ENCODE measurements at regions of chr12 and their contacts with region 1.

Region 1: DNA sequence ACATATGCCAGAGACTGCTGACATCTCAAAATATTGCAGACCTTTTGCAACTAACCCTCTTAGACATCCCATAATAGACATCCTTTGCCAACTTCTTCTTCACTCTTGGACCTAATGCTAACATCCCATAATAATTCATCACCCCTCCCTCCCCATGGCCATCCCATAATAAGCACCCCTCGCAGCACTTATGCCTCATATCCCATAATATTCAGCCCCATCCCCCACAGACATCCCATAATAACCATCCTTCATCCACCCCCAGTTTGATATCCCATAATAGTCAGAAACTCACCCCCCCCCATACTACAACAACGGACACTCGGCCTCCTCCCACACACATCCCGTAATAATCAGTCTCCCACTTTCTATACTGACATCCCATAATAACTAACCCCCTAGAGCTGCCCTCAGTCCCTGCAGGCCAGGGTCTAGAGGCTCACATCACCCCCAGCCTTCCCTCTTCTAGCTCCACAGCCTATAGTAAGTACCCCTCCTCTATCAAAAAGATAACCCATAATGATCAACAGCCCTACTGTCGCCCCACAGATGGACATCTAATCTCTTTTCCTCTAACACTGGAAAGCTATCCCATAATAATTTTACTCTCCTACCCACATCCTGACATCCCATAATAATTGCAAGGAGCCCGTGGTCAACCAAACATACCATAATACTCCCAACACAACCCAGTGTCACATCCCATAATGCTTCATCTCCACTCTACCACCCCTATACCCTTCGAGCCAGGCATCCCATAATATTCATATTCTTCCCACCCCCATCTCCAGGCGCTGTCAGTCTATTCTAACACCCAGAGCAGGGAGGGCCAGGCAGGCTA is 792 bp upstream of the CHD4 start:
- DNase-seq: peak; percentile 83
- H3K4me3 ChIP-seq: no peak overlapping the region
- H3K27ac ChIP-seq: peak overlapping the region; percentile 69
- H3K4me1 ChIP-seq: peaks cover 21% of the 10 kb centered on the region
- H3K27me3 ChIP-seq: no peaks in the 10 kb centered on the region
- CTCF ChIP-seq: no peak

Region 2: DNA sequence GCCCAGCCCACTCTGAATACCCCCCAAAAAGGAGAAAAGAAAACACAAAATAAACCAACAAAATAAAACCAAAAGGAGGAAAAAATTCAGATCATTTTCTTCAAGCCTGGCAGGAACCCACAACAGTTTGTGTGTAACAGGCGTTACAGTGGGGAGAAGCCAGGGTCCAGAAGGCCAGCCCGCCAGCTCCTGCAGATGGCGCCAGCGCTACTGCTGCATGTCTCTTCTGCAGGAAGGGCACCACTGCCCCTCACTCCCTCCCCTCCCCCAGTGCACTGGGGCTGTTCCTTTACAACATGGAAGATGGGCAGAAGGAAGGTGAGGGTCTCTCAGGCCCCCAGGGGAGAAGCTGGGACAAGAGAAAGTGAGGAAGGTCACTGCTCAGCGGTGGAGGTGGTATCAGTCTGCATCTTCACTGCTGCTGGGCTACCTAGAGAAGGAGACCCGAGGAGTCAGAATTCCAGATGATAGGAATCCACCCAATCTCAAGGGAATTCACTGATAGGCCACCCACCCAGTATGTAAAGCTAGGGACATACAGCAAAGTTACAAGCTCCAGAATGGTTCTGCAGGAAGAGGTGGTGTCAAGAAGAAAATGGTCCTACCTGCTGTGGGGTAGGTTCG is 37.6 kb before region 1 on chr12:
- intact Hi-C with region 1: loop called (anchors 5 kb)
- DNase-seq: peak; percentile 59
- H3K4me3 ChIP-seq: no peak overlapping the region
- H3K27ac ChIP-seq: no peak overlapping the region
- H3K4me1 ChIP-seq: no peaks in the 10 kb centered on the region
- H3K27me3 ChIP-seq: no peaks in the 10 kb centered on the region
- CTCF ChIP-seq: peak; percentile 42

Region 3: DNA sequence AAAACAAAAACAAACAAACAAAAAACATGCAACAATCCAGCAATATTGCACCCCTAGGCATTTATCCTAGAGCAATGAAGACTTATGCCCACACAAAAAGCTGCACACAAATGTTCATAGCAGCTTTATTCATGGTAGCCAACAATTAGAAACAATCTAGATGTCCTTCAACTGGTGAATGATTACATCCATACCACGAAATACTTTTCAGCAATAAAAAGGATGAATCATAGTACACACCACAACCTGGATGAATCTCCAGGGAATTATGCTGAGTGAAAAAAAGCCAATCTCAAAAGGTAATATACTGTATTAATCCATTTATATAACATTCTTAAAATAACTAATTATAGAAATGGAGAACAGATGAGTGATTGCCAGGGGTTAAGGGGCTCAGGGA is 199.2 kb after region 1 on chr12:
- intact Hi-C with region 1: no loop called
- DNase-seq: no peak
- H3K4me3 ChIP-seq: no peak overlapping the region
- H3K27ac ChIP-seq: no peak overlapping the region
- H3K4me1 ChIP-seq: no peaks in the 10 kb centered on the region
- H3K27me3 ChIP-seq: no peaks in the 10 kb centered on the region
- CTCF ChIP-seq: no peak

Region 4: DNA sequence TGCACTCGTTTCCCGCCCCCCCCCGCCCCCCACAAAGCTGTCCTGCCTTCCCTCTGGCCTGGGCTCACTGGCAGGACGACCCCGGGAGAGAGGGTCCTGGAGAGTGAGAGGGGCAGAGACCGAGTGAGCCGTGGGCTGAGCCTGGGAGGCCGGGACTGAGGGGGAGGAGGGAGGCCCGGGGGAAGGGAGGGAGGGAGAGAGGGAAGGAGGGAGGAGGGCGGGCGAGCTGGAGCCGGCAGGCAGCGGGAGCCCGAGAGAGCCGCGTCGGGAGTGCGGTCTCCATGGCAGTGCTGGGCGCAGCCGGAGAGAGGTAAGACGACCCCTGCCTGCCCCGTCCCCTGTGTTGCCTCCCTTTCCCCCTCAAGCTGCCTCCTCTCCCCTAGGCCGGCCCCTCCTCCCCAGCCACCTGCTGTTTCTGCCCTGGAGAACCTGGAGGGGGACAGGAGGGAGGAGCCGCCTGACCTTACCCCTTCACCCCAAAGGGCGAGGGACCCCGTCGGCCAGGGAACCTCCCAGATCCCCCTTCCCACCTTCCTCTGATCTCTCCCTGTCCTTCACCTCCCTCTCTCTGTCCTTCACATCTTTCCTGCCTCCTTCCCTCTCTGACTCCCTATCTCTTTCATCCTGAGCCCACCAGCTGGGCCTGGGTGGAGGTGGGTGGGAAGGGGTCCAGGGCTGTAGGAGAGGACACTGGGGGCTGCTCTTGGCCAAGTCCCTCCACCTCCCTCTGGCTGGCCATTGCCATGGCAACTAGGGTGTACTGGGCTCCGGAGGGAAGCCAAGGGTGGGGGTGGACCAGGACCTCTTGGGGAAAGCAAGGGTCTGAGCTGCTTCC is 213.8 kb after region 1 on chr12 and contains the start of gene GPR162:
- intact Hi-C with region 1: no loop called
- DNase-seq: no peak
- H3K4me3 ChIP-seq: peak within 1 kb of the TSS; percentile 24
- H3K27ac ChIP-seq: no peak within 1 kb of the TSS
- H3K4me1 ChIP-seq: no peaks in the 10 kb centered on the region
- H3K27me3 ChIP-seq: peaks cover 16% of the 10 kb centered on the region
- CTCF ChIP-seq: no peak
- total RNA-seq, gene GPR162: 1.9 to 2.7 TPM